Activated naive CD4-positive, alpha-beta T cell treated with anti-CD3 and anti-CD28 coated beads, Interleukin-2, amount 10 ng/mL, durations not matched to agents 7 days and 5 days (primary cell): ENCODE measurements at regions of chr6 and their contacts with region 1.

Region 1: GRCh38 chr6:134063966-134064445 is 11.6 kb upstream of the SLC2A12 start:
- DNase-seq: peak; percentile 75
- H3K4me3 Mint-ChIP-seq: no peak overlapping the region
- H3K27ac Mint-ChIP-seq: no peak overlapping the region
- H3K4me1 Mint-ChIP-seq: no peaks in the 10 kb centered on the region
- H3K27me3 Mint-ChIP-seq: peaks cover 10% of the 10 kb centered on the region

Region 2: DNA sequence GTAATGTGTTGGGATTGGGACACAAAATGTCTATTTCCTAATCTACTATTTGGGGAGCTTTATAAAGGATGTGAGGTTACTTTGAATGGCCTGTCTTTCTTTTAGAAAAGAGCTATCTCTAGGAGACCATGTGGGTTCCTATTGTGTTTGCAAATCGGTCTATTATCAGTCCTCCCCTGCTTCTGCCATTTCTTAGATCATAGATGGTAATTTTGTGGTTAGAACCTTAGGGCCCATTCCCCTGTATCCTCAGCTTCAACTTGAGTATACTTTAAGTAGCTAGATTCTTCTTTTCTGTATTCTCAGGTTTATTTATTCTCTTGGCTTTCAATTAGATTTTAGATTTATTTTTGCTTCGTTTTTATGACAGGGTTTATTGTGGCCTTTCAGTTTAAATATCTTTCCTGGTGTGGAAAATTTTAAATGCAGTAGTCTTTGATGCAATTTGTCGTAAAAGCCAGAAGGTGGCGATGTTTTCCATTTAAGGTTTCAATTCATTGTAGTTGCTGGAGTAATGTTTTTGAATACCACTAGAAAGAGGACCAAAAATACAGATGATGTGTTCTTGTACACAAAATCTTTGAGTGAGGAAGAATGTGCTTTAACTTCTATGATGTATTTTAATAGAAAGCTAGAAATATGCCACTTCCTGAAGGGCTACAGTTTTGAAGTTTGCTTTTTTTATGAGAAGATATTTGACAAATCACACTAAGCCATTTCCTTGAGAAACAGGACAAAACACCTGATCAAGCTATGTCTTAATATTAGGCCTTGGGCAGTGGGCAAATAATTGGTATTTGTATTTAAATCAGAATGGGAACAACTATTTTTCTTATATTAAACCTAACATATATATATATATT is 90.7 kb before region 1 on chr6:
- CTCF ChIA-PET with region 1: interaction called, 109 read pairs
- DNase-seq: no peak
- H3K4me3 Mint-ChIP-seq: no peak overlapping the region
- H3K27ac Mint-ChIP-seq: no peak overlapping the region
- H3K4me1 Mint-ChIP-seq: peaks cover 16% of the 10 kb centered on the region
- H3K27me3 Mint-ChIP-seq: no peaks in the 10 kb centered on the region

Region 3: DNA sequence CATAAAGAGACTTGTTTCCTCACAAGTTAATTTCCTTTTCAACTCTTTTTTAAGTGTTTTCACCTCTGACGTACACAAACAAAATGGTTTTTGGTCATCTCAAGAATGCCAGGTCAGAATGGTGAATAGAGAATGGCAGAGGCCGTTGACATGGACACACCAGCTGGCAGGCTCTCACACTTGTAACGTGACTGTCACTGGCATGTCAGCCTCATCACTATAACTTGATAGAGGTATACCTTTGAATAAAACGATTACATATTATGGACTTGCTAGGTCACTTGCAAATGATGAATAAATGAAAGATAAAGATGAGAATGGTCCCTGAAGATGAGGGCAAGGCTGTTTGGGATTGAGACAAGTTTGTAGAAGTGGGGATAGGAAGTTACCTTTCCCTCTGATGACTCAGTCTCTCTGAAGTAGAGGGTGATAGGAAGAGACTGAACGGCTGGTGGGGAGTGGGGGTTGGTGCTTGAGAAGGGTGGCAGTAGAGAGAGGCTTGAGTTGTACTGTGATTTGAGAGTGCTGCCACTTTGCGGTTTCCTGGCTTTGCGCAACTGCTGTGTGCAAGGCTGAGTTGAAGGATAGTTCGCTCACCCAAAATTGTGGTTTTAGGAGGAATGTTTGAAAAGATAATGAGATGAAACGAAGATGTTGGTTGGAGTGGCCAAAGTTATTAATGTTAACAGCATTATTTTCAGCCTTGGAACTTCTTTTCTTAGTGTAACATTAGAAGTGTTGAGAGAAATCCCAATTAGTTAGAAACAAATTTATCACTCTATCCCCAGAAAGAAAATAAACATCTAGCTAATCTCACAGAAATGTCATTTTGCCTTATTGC is 80.7 kb before region 1 on chr6:
- CTCF ChIA-PET with region 1: interaction called, 109 read pairs
- DNase-seq: peak; percentile 65
- H3K4me3 Mint-ChIP-seq: no peak overlapping the region
- H3K27ac Mint-ChIP-seq: peak overlapping the region; percentile 58
- H3K4me1 Mint-ChIP-seq: peaks cover 52% of the 10 kb centered on the region
- H3K27me3 Mint-ChIP-seq: no peaks in the 10 kb centered on the region

Region 4: GRCh38 chr6:134047673-134048072 is 16.3 kb before region 1 on chr6:
- CTCF ChIA-PET with region 1: interaction called, 29 read pairs
- DNase-seq: no peak
- H3K4me3 Mint-ChIP-seq: no peak overlapping the region
- H3K27ac Mint-ChIP-seq: no peak overlapping the region
- H3K4me1 Mint-ChIP-seq: peaks cover 7% of the 10 kb centered on the region
- H3K27me3 Mint-ChIP-seq: peaks cover 37% of the 10 kb centered on the region

Region 5: DNA sequence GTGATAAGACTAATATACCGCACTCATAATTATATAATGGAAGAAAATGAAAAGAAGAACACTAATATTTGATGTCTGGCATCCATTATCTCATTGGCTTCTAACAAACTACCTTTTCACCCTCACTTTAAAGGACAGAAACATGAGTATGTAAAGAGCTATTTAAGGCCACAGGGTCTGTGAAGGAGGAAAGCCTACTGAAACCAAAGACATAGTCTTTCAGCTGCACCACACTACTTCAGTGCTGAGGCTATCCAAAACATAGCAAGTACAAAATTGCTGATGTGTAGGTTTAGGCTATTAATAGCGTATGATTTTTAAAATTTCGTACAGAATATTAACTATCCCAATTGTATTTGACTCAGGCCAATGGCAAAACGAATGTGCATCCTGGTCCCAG is 26.6 kb after region 1 on chr6:
- CTCF ChIA-PET with region 1: interaction called, 35 read pairs
- DNase-seq: no peak
- H3K4me3 Mint-ChIP-seq: no peak overlapping the region
- H3K27ac Mint-ChIP-seq: no peak overlapping the region
- H3K4me1 Mint-ChIP-seq: peaks cover 4% of the 10 kb centered on the region
- H3K27me3 Mint-ChIP-seq: peaks cover 32% of the 10 kb centered on the region

Region 6: DNA sequence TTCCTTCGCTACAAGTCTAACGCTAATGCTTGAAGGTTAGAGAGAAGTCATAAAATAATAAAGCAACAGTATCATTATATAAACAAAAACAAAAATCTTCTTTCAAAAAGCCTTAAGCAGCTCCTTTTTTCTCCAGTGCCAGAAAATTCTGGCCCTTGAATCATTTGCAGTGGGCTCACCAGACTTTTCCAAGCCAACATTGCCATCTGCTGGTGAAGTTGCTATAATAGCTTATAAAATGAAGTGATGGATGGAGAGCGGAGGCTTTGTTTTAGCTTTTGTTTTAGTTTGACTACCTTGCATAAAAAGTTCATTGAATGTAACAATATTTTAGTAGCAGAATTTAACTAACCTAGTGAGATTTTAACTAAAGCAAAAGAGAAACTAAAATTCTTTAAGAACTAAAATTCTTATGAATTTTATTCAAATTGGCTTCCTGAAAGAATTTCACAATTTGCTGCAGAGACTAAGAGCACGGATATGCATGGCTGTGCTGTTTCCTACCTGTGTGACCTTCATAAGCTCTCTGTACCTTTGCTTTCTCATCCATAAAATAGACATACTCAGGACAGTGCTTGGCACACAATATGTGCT is 33.2 kb after region 1 on chr6:
- CTCF ChIA-PET with region 1: interaction called, 35 read pairs
- DNase-seq: peak; percentile 79
- H3K4me3 Mint-ChIP-seq: no peak overlapping the region
- H3K27ac Mint-ChIP-seq: no peak overlapping the region
- H3K4me1 Mint-ChIP-seq: peaks cover 4% of the 10 kb centered on the region
- H3K27me3 Mint-ChIP-seq: peaks cover 14% of the 10 kb centered on the region